Aorta (tissue), 5 donors: ENCODE measurements at regions of chr11 and their contacts with region 1.

Region 1: GRCh38 chr11:118198370-118198769 is 21.9 kb upstream of the SCN2B start:
- DNase-seq: peak; percentile 84 to 92
- ATAC-seq: peak; percentile 69
- H3K4me3 ChIP-seq: no peak overlapping the region
- H3K27ac ChIP-seq: no peak overlapping the region
- H3K4me1 ChIP-seq: peaks cover 3 to 4% of the 10 kb centered on the region in 2 donors
- H3K27me3 ChIP-seq: no peaks in the 10 kb centered on the region

Region 2: DNA sequence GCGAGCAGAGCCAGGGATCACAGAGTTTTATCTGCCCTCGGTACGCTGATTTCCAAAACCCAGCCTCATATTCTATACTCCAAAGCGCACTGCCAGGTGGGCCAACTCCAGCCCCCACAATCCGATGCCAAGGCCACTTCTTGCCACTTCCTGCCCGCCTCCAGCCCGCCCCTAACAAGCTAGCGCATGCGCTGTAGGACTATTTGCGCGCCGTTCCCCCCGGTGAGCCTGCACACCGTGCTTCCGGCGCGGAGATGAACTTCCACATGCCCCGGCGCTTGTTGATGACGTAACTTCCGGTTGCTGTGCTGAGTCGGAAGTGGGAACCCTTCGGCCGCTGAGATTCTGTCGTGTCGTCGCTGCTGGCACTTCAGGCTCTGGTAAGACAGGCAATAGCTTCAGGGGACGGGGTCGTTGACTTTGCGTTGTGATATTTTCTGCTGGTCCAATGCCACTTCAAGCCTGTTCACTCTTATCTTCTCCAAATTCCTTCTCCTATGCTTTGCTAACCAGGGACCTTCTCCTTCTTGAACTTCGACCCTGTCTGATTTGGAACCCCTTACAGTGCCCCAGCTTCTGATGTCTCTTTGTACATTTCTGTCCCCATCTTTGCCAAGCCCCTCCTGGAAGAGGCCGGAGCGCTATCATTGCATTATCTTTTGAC is 161.1 kb after region 1 on chr11 and contains the start of gene UBE4A:
- intact Hi-C with region 1: loop called in 1 of 2 experiments (anchors 10 kb)
- DNase-seq: peak; percentile 98 to 99
- ATAC-seq: peak; percentile 96
- H3K4me3 ChIP-seq: peak within 1 kb of the TSS; percentile 89 to 92
- H3K27ac ChIP-seq: no peak within 1 kb of the TSS
- H3K4me1 ChIP-seq: peaks cover 0 to 1% of the 10 kb centered on the region in 2 donors
- H3K27me3 ChIP-seq: no peaks in the 10 kb centered on the region
- total RNA-seq, gene UBE4A: 33.4 to 35.2 TPM